ENCODE measurements at regions of chr12 and their contacts with region 1.

Region 1: DNA sequence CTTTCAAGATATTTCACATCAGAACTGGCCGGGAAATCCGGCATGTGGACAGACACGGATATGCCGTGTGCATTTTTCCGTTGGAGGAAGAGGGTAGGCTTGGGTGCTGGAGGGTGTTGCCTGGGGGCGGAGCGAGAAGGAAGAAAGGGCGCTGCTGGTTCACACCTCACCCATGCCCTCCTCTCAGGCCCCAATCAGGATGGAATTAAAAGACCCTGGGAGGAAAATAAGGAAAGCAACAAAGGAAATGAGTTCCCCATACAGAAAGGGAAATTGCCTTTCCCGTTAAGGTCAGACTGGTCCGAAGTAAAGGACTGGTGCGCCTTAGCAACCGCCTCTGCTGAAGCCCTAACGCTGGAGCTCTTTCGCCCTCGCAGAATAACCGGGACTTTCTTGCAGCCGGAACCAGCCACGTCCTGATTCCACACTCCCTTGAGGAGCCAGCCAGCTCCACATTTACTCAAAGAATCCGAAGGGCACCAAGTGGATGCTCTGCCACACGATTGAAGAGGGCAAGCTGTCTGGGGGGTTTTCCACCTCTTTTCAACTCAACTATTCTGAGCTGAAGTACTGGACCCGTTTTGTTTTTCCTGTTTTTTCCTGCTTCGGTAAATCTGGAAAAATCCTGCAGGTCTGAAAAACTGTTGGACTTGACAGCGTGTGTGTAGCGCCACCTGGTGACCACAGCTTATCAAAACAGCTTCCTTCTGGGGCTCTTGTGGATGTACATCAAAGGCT is 37.7 kb upstream of the BCL2L14 start:
- DNase-seq: peak in 4 of 5 donors; percentile 55 to 75 (median 64)
- H3K4me3 ChIP-seq: peak overlapping the region; percentile 70
- H3K4me3 Mint-ChIP-seq: peak overlapping the region; percentile 68 to 92 (median 78)
- H3K27ac ChIP-seq: no peak overlapping the region
- H3K27ac Mint-ChIP-seq: peak overlapping the region; percentile 17 to 94 (median 66)
- H3K4me1 ChIP-seq: peaks cover 14% of the 10 kb centered on the region
- H3K4me1 Mint-ChIP-seq: peaks cover 17 to 33% (median 20%) of the 10 kb centered on the region in 3 donors
- H3K27me3 ChIP-seq: no peaks in the 10 kb centered on the region
- H3K27me3 Mint-ChIP-seq: peaks cover 0 to 8% of the 10 kb centered on the region in 2 donors

Region 2: DNA sequence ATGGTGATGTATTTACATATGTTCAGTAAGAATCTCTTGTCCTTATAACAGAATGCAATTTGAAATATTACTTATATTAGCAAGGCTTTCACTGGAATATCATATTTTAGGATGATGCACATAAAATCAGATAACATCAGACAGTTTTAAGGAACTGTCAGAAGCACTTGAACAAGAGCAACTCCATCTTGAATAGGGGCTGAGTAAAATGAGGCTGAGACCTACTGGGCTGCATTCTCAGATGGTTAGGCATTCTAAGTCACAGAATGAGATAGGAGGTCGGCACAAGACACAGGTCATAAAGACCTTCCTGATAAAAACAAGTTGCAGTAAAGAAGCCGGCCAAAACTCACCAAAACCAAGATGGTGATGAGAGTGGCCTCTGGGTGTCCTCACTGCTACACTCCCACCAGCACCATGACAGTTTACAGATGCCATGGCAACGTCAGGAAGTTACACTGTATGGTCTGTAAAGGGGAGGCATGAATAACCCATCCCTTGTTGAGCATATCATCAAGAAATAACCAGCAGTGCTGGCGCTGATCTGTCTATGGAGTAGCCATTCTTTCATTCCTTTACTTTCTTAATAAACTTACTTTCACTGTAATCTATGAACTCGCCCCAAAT is 411.1 kb before region 1 on chr12:
- CTCF ChIA-PET with region 1: interaction called, 15 read pairs
- POLR2A ChIA-PET with region 1: no interaction called
- DNase-seq: peak in 3 of 5 donors; percentile 15 to 63 (median 25)
- H3K4me3 ChIP-seq: no peak overlapping the region
- H3K4me3 Mint-ChIP-seq: no peak overlapping the region
- H3K27ac ChIP-seq: no peak overlapping the region
- H3K27ac Mint-ChIP-seq: peak overlapping the region in 3 of 8 donors; percentile 37 to 56 (median 48)
- H3K4me1 ChIP-seq: no peaks in the 10 kb centered on the region
- H3K4me1 Mint-ChIP-seq: no peaks in the 10 kb centered on the region
- H3K27me3 ChIP-seq: no peaks in the 10 kb centered on the region
- H3K27me3 Mint-ChIP-seq: no peaks in the 10 kb centered on the region